ENCODE measurements at regions of chr10 and their contacts with region 1.

Region 1: GRCh38 chr10:91123246-91123645 is 97.2 kb upstream of the PCGF5 start:
- DNase-seq: no peak
- ATAC-seq: no peak
- H3K4me3 Mint-ChIP-seq: no peak overlapping the region
- H3K27ac Mint-ChIP-seq: no peak overlapping the region
- H3K4me1 Mint-ChIP-seq: peaks cover 1% of the 10 kb centered on the region
- H3K27me3 Mint-ChIP-seq: no peaks in the 10 kb centered on the region
- CTCF ChIP-seq: no peak

Region 2: GRCh38 chr10:91103384-91104192 is 19.7 kb before region 1 on chr10:
- CTCF ChIA-PET with region 1: no interaction called
- POLR2A ChIA-PET with region 1: no interaction called
- intact Hi-C with region 1: loop called (anchors 2 kb)
- DNase-seq: no peak
- ATAC-seq: peak; percentile 82
- H3K4me3 Mint-ChIP-seq: peak overlapping the region; percentile 64
- H3K27ac Mint-ChIP-seq: peak overlapping the region; percentile 54
- H3K4me1 Mint-ChIP-seq: peaks cover 32% of the 10 kb centered on the region
- H3K27me3 Mint-ChIP-seq: no peaks in the 10 kb centered on the region
- CTCF ChIP-seq: no peak

Region 3: GRCh38 chr10:91313796-91314485 is 190.7 kb after region 1 on chr10:
- CTCF ChIA-PET with region 1: no interaction called
- POLR2A ChIA-PET with region 1: no interaction called
- intact Hi-C with region 1: no loop called
- DNase-seq: no peak
- ATAC-seq: no peak
- H3K4me3 Mint-ChIP-seq: no peak overlapping the region
- H3K27ac Mint-ChIP-seq: no peak overlapping the region
- H3K4me1 Mint-ChIP-seq: no peaks in the 10 kb centered on the region
- H3K27me3 Mint-ChIP-seq: peaks cover 13% of the 10 kb centered on the region
- CTCF ChIP-seq: no peak

Measured in activated B cell treated with CpG ODN at 0.5 μM for 24 hours (primary cell).